ENCODE measurements at regions of chr19 and their contacts with region 1.

Region 1: GRCh38 chr19:41310033-41310758 is at the start of gene CCDC97:
- DNase-seq: peak; percentile 90 to 96 (median 95)
- H3K4me3 ChIP-seq: peak within 1 kb of the TSS; percentile 72 to 99 (median 94)
- H3K27ac ChIP-seq: peak within 1 kb of the TSS; percentile 94 to 97
- H3K4me1 ChIP-seq: peaks cover 25 to 60% (median 55%) of the 10 kb centered on the region in 4 experiments
- H3K27me3 ChIP-seq: no peaks in the 10 kb centered on the region

Region 2: GRCh38 chr19:41206926-41207750 is 103.1 kb before region 1 on chr19:
- CTCF ChIA-PET with region 1: interaction called, 35 read pairs
- POLR2A ChIA-PET with region 1: interaction called, 4 read pairs
- DNase-seq: no peak
- H3K4me3 ChIP-seq: no peak overlapping the region
- H3K27ac ChIP-seq: no peak overlapping the region
- H3K4me1 ChIP-seq: peaks cover 0 to 3% (median 0%) of the 10 kb centered on the region in 4 experiments
- H3K27me3 ChIP-seq: no peaks in the 10 kb centered on the region

Region 3: GRCh38 chr19:41263850-41264580 is 46.2 kb before region 1 on chr19 and contains the start of gene HNRNPUL1:
- CTCF ChIA-PET with region 1: interaction called, 24 read pairs
- POLR2A ChIA-PET with region 1: interaction called, 42 read pairs
- DNase-seq: peak; percentile 100
- H3K4me3 ChIP-seq: peak within 1 kb of the TSS; percentile 64 to 97 (median 90)
- H3K27ac ChIP-seq: peak within 1 kb of the TSS; percentile 95 to 99
- H3K4me1 ChIP-seq: peaks cover 9 to 37% (median 28%) of the 10 kb centered on the region in 4 experiments
- H3K27me3 ChIP-seq: no peaks in the 10 kb centered on the region

Region 4: DNA sequence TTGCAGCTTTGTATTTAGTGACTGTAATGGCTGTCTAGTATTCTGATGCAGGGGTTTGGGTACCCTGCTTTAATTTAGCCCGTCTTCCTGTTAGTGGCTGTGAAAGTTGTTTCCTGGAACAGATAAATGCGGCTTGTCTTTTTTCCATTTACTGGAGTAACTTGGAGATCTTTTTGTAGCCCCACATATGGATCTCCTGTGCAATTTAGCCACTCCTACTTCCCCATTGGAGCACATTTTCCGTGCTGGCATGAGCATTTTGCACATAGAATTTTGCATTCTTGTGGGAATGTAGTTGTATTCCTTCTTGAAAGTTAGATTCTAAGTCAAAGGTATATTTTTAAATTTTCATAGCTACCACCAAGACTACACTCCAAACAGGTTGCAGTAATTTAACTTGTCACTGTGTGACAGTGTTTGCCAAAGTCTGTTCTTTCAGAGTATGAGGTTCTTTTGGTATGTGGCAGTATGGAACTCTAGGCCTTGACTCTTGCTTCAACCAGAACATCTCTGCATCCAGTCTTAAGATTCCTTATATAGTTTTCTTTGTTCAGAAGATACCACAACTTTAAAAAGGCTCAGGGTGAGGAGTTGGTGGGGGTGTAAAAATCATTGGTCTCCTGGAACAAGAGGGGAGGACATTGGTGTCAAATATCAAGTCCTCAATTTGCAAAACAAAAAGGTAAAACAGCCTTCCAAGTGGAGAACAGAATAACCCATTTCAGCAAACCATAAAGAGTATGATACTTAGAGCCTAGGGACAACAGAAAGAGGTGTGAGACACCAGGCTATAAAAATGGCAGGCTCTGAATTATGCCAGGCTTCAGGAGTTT is 21.3 kb before region 1 on chr19:
- CTCF ChIA-PET with region 1: interaction called, 28 read pairs
- POLR2A ChIA-PET with region 1: interaction called, 4 read pairs
- DNase-seq: peak in 2 of 3 donors; percentile 45 to 47
- H3K4me3 ChIP-seq: no peak overlapping the region
- H3K27ac ChIP-seq: peak overlapping the region; percentile 17 to 27
- H3K4me1 ChIP-seq: no peaks in the 10 kb centered on the region
- H3K27me3 ChIP-seq: no peaks in the 10 kb centered on the region

Region 5: DNA sequence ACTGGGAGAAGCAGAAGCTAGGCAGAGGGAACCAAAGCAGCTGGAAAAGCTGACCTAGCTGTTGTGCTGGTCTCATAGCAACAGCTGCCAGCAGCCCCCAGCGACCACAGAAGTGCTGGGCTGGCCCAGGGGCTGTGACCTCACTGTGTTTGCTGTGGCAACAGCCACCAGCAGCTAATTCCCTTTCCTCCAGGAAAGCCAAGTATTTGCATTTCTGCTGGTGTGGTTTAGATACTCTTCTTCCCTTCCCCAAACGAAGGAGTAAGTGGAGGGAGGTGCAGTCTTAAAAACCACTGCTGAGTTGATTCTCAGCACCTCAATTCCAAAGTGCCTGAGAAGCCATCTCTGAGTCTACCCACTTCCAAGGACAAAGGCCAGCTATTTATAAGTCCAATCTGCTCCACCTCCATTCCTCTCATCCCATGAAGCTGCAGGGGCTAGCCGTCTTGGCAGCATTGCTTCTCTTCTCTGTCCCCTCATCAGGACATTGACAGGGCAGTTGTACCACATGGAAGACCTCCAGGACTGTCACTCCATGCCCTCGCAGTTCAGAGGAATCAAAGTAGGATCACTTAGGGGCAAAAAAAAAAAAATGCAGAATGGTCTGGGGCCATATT is 11.7 kb before region 1 on chr19:
- CTCF ChIA-PET with region 1: interaction called, 39 read pairs
- POLR2A ChIA-PET with region 1: interaction called, 15 read pairs
- DNase-seq: peak; percentile 94 to 95 (median 94)
- H3K4me3 ChIP-seq: peak overlapping the region in 2 of 7 experiments; percentile 27 to 40
- H3K27ac ChIP-seq: peak overlapping the region; percentile 99
- H3K4me1 ChIP-seq: peaks cover 26 to 76% (median 58%) of the 10 kb centered on the region in 4 experiments
- H3K27me3 ChIP-seq: no peaks in the 10 kb centered on the region

Region 6: DNA sequence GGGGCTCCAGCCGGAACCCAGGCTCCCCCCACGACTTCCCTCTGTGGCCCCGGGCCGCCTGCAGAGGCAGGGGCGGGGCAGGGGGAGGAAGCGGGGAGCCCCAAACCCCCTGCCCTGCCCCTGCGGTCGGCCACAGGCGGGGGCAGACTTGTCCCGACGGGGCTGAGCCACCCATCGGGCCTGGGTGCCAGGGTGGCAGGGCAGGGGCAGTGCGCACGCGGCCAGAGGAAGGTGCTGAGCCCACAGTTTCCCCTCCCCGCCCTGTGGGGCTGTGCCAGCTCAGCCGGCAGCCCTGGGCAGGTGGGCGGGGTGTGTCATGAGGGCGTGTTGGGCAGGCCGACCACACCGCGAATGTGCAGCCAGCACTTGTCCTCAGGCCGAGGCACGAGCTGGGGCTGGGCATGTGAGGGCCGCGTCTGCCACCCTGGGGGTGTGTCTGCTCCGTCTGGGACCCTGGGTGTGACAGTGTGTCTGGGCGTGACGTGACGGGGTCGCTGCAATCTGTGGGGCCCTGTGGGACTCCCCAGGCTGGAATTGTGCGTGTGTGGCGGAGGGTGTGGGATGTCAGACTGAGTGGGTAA is 17.5 kb after region 1 on chr19:
- CTCF ChIA-PET with region 1: interaction called, 10 read pairs
- POLR2A ChIA-PET with region 1: interaction called, 18 read pairs
- DNase-seq: peak; percentile 84 to 95 (median 91)
- H3K4me3 ChIP-seq: peak overlapping the region in 4 of 7 experiments; percentile 48 to 62 (median 56)
- H3K27ac ChIP-seq: peak overlapping the region in 1 of 2 experiments; percentile 27
- H3K4me1 ChIP-seq: peaks cover 28 to 80% (median 79%) of the 10 kb centered on the region in 4 experiments
- H3K27me3 ChIP-seq: no peaks in the 10 kb centered on the region

Region 7: GRCh38 chr19:41341669-41342490 is 31.7 kb after region 1 on chr19:
- CTCF ChIA-PET with region 1: no interaction called
- POLR2A ChIA-PET with region 1: no interaction called
- DNase-seq: peak in 1 of 3 donors; percentile 40
- H3K4me3 ChIP-seq: no peak overlapping the region
- H3K27ac ChIP-seq: no peak overlapping the region
- H3K4me1 ChIP-seq: peaks cover 0 to 13% (median 7%) of the 10 kb centered on the region in 4 experiments
- H3K27me3 ChIP-seq: no peaks in the 10 kb centered on the region

Measured in common myeloid progenitor, CD34-positive (primary cell).